T-cell (primary cell): ENCODE measurements at regions of chr13 and their contacts with region 1.

Region 1: DNA sequence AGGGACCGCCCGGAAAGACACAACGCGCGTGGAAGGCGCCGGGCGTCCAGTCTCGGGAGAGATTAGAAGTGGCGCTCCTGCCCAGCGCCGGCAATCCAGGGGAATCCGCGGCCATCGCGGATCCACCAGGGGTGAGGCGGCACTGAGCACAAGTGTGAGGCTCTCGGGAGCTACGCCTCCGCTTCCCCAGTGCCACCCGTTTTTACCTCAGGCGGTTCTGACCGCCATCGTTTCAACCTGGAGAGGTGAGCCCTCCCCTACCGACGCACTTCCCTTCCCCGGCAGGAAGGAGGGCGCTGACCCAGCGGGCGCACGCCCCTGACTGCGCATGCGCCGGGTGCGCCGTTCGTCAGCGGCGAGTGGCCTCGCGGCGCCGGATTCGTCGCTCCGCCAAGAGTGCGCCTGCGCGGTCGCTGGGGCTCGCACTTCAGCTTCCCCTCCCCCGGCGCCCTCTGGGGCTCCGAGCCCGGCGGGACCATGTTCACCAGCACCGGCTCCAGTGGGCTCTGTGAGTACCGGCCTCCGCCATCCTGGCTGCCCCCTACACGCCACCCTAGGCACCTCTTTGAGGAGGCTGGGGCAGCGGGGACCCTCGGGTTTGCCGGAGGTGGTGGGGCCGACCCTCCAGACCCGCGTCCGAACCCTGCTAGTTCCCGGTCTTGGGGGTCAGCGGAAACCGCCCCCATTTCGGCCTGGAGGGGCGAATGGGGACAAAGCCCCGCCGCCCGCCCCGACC is at the start of gene UBAC2:
- DNase-seq: peak; percentile 92 to 100 (median 96)
- ATAC-seq: peak; percentile 82 to 85 (median 82)
- H3K4me3 ChIP-seq: peak within 1 kb of the TSS; percentile 93 to 97
- H3K4me3 Mint-ChIP-seq: peak within 1 kb of the TSS; percentile 85 to 99 (median 99)
- H3K27ac ChIP-seq: peak within 1 kb of the TSS; percentile 99
- H3K27ac Mint-ChIP-seq: peak within 1 kb of the TSS; percentile 94 to 98
- H3K4me1 ChIP-seq: peaks cover 33 to 50% of the 10 kb centered on the region in 2 experiments
- H3K4me1 Mint-ChIP-seq: peaks cover 62 to 68% (median 67%) of the 10 kb centered on the region in 3 donors
- H3K27me3 ChIP-seq: no peaks in the 10 kb centered on the region
- H3K27me3 Mint-ChIP-seq: no peaks in the 10 kb centered on the region
- total RNA-seq, gene UBAC2: 83.3 to 99.3 (median 84.9) TPM

Region 2: GRCh38 chr13:99214232-99214631 is 13.6 kb after region 1 on chr13:
- CTCF ChIA-PET with region 1: interaction called, 3 to 7 read pairs
- POLR2A ChIA-PET with region 1: interaction called, 4 to 21 read pairs
- DNase-seq: peak in 12 of 35 experiments; percentile 12 to 51 (median 34)
- ATAC-seq: peak in 2 of 4 experiments; percentile 9 to 19
- H3K4me3 ChIP-seq: peak overlapping the region; percentile 47 to 54
- H3K4me3 Mint-ChIP-seq: peak overlapping the region; percentile 90 to 93 (median 90)
- H3K27ac ChIP-seq: peak overlapping the region; percentile 83
- H3K27ac Mint-ChIP-seq: peak overlapping the region; percentile 98 to 99
- H3K4me1 ChIP-seq: peaks cover 53 to 65% of the 10 kb centered on the region in 2 experiments
- H3K4me1 Mint-ChIP-seq: peaks cover 82 to 85% (median 84%) of the 10 kb centered on the region in 3 donors
- H3K27me3 ChIP-seq: no peaks in the 10 kb centered on the region
- H3K27me3 Mint-ChIP-seq: no peaks in the 10 kb centered on the region

Region 3: DNA sequence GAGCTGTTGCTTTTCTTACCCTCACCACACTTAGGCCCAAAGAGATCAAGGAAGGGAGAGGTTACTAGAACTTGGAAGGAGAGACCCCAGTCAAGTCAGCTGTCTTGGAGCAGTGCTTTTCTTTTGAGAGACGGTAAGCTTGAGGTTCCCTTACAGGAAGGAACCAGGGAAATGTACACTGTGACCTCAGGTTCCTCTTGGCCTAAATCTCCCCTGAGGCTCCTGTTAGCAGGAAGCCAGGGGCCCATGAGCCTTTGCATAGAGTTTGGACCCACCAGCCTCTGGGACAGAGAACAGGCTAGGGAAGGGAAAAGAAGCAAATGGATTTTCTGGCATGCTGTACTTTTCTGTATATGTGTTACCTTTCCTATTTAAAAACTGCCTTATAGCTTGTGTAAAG is 63.5 kb after region 1 on chr13:
- CTCF ChIA-PET with region 1: interaction called, 9 to 128 read pairs
- POLR2A ChIA-PET with region 1: interaction called, 3 to 6 read pairs
- DNase-seq: peak in 1 of 35 experiments; percentile 42
- ATAC-seq: peak; percentile 34 to 45 (median 39)
- H3K4me3 ChIP-seq: no peak overlapping the region
- H3K4me3 Mint-ChIP-seq: no peak overlapping the region
- H3K27ac ChIP-seq: peak overlapping the region; percentile 47
- H3K27ac Mint-ChIP-seq: peak overlapping the region; percentile 80 to 89
- H3K4me1 ChIP-seq: peaks cover 37 to 43% of the 10 kb centered on the region in 2 experiments
- H3K4me1 Mint-ChIP-seq: peaks cover 63 to 68% (median 68%) of the 10 kb centered on the region in 3 donors
- H3K27me3 ChIP-seq: no peaks in the 10 kb centered on the region
- H3K27me3 Mint-ChIP-seq: no peaks in the 10 kb centered on the region